CD4-positive, alpha-beta memory T cell (primary cell): ENCODE measurements at regions of chr3 and their contacts with region 1.

Region 1: DNA sequence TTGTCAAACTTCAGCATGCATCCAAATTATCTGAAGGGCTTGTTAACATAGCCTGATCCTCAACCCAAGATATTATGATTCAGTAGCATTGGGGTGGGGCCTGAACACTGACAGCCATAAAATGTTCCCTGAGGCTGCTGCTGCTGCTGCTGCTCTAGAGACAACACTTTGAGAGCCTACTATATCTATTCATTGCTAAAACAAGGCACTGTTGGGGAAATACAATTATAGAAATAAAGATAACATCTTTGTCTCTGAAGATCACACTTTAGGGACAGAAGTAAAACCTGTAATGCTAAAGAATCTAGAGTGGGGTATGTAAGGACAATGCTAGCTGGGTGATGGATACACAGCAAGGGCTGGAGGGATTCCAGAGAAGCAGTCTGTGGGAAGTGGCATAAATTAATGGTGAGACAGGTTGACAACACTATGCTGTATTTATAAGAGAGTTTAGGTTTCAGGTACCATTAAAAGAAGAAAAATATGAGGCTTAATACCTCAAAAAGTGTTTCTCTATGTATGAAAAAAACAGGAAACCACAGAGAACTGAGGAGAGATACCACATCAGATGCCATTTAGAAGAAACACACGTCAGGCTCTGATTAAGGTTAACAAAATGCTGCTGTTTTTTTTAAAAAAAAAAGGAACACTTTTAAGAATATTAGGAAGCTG is 115.9 kb downstream of the CBLB start:
- DNase-seq: peak; percentile 76 to 87 (median 82)
- H3K4me3 ChIP-seq: peak overlapping the region in 1 of 2 donors; percentile 28
- H3K4me3 Mint-ChIP-seq: peak overlapping the region; percentile 64 to 83 (median 76)
- H3K27ac ChIP-seq: peak overlapping the region; percentile 43
- H3K27ac Mint-ChIP-seq: peak overlapping the region; percentile 89 to 99 (median 96)
- H3K4me1 ChIP-seq: peaks cover 95% of the 10 kb centered on the region
- H3K4me1 Mint-ChIP-seq: peaks cover 52 to 88% (median 66%) of the 10 kb centered on the region in 4 donors
- H3K27me3 ChIP-seq: no peaks in the 10 kb centered on the region
- H3K27me3 Mint-ChIP-seq: no peaks in the 10 kb centered on the region

Region 2: DNA sequence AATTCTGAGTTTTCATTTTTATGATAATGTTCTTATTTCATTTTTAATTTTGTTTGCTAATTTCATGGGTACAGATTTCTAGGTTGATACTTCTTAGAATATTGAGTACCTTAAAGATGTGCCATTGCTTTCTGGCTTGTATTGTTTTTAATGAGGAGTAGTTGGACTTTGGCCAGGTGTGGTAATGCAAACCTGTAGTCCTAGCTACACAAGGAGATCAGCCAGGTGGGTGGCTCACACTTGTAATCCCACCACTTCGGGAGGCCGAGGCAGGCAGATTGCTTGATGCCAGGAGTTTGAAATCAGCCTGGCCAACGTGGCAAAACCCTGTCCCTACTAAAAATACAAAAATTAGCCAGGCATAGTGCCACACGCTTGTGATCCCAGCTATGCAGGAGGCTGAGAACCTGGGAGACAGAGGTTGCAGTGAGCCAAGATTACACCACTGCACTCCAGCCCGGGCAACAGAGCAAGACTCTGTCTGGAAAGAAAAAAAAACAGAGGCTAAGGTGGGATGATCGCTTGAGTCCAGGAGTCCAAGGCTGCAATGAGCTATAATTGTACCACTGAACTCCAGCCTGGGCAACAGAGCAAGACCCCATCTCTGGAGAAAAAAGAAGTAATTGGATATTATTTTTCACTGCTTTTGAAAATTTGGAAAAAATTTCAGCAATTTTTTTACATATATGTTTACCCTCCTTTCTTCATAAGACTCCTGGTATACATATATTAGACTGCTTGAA is 188.2 kb before region 1 on chr3:
- CTCF ChIA-PET with region 1: no interaction called
- POLR2A ChIA-PET with region 1: no interaction called
- intact Hi-C with region 1: no loop called
- DNase-seq: no peak
- H3K4me3 ChIP-seq: no peak overlapping the region
- H3K4me3 Mint-ChIP-seq: no peak overlapping the region
- H3K27ac ChIP-seq: no peak overlapping the region
- H3K27ac Mint-ChIP-seq: no peak overlapping the region
- H3K4me1 ChIP-seq: no peaks in the 10 kb centered on the region
- H3K4me1 Mint-ChIP-seq: no peaks in the 10 kb centered on the region
- H3K27me3 ChIP-seq: no peaks in the 10 kb centered on the region
- H3K27me3 Mint-ChIP-seq: no peaks in the 10 kb centered on the region

Region 3: GRCh38 chr3:105686278-105686897 is 66.5 kb before region 1 on chr3:
- CTCF ChIA-PET with region 1: no interaction called
- POLR2A ChIA-PET with region 1: no interaction called
- intact Hi-C with region 1: loop called (anchors 2 kb)
- DNase-seq: peak in 4 of 5 donors; percentile 51 to 56 (median 52)
- H3K4me3 ChIP-seq: no peak overlapping the region
- H3K4me3 Mint-ChIP-seq: no peak overlapping the region
- H3K27ac ChIP-seq: no peak overlapping the region
- H3K27ac Mint-ChIP-seq: peak overlapping the region in 4 of 7 donors; percentile 31 to 79 (median 61)
- H3K4me1 ChIP-seq: peaks cover 18% of the 10 kb centered on the region
- H3K4me1 Mint-ChIP-seq: peaks cover 21 to 28% (median 23%) of the 10 kb centered on the region in 4 donors
- H3K27me3 ChIP-seq: no peaks in the 10 kb centered on the region
- H3K27me3 Mint-ChIP-seq: no peaks in the 10 kb centered on the region

Region 4: DNA sequence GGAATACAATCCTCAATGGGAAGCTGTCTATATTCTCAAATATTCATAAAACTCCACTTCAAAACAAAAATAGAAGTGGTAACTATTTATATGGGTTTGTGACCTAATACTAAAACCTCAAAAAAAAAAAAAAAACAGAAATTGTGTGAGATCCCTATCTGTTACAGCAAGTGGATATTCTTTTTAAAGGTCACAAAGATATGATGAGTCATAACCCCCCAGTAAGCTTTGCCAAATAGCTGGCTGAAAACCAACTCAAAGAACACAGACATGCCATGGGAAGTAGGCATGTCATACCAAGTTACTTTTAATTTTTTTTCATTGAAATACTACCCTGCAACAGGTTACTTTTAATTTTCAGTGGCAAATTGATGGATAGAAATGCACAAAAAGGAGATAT is 53.5 kb after region 1 on chr3:
- CTCF ChIA-PET with region 1: no interaction called
- POLR2A ChIA-PET with region 1: interaction called, 3 read pairs
- intact Hi-C with region 1: loop called (anchors 1 kb)
- DNase-seq: peak in 4 of 5 donors; percentile 50 to 79 (median 62)
- H3K4me3 ChIP-seq: no peak overlapping the region
- H3K4me3 Mint-ChIP-seq: peak overlapping the region in 5 of 8 donors; percentile 0 to 48 (median 3)
- H3K27ac ChIP-seq: no peak overlapping the region
- H3K27ac Mint-ChIP-seq: peak overlapping the region; percentile 35 to 89 (median 76)
- H3K4me1 ChIP-seq: peaks cover 59% of the 10 kb centered on the region
- H3K4me1 Mint-ChIP-seq: peaks cover 46 to 72% (median 54%) of the 10 kb centered on the region in 4 donors
- H3K27me3 ChIP-seq: no peaks in the 10 kb centered on the region
- H3K27me3 Mint-ChIP-seq: no peaks in the 10 kb centered on the region

Region 5: DNA sequence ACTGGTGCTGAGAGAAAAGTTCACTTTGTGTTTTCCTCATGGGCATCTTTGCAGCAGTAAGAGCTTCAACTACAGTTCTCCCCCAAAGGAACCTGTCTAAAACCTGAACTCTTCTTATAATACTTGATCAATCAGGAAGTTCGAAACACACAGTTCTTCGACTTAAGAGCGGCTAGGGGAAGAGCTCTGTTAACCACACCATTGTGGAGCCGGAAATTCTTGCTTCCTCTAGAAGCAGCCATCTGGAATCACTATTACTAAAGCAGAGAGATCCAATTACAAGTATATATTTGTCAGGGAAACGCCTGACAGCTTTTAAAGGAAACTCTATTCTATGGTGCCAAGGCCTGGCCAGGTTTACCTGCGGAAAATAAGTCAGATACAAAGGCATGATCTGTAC is 453.3 kb after region 1 on chr3:
- CTCF ChIA-PET with region 1: no interaction called
- POLR2A ChIA-PET with region 1: no interaction called
- intact Hi-C with region 1: loop called (anchors 10 kb)
- DNase-seq: peak; percentile 21 to 43 (median 30)
- H3K4me3 ChIP-seq: peak overlapping the region in 1 of 2 donors; percentile 2
- H3K4me3 Mint-ChIP-seq: peak overlapping the region; percentile 31 to 84 (median 77)
- H3K27ac ChIP-seq: no peak overlapping the region
- H3K27ac Mint-ChIP-seq: peak overlapping the region; percentile 59 to 88 (median 81)
- H3K4me1 ChIP-seq: peaks cover 28% of the 10 kb centered on the region
- H3K4me1 Mint-ChIP-seq: peaks cover 24 to 38% (median 27%) of the 10 kb centered on the region in 4 donors
- H3K27me3 ChIP-seq: no peaks in the 10 kb centered on the region
- H3K27me3 Mint-ChIP-seq: no peaks in the 10 kb centered on the region

Region 6: GRCh38 chr3:107522510-107523288 is 1769.8 kb after region 1 on chr3 and contains the start of gene BBX:
- CTCF ChIA-PET with region 1: no interaction called
- POLR2A ChIA-PET with region 1: no interaction called
- intact Hi-C with region 1: loop called (anchors 5 kb)
- DNase-seq: peak; percentile 92 to 98 (median 96)
- H3K4me3 ChIP-seq: peak within 1 kb of the TSS; percentile 70 to 88
- H3K4me3 Mint-ChIP-seq: peak within 1 kb of the TSS; percentile 97 to 99 (median 98)
- H3K27ac ChIP-seq: peak within 1 kb of the TSS; percentile 87
- H3K27ac Mint-ChIP-seq: peak within 1 kb of the TSS; percentile 88 to 98 (median 97)
- H3K4me1 ChIP-seq: peaks cover 29% of the 10 kb centered on the region
- H3K4me1 Mint-ChIP-seq: peaks cover 21 to 29% (median 25%) of the 10 kb centered on the region in 4 donors
- H3K27me3 ChIP-seq: no peaks in the 10 kb centered on the region
- H3K27me3 Mint-ChIP-seq: no peaks in the 10 kb centered on the region
- total RNA-seq, gene BBX: 93.9 to 99.1 TPM